SK-N-SH (cell line): ENCODE measurements at regions of chr17 and their contacts with region 1.

Region 1: GRCh38 chr17:75625813-75626486 is 7.3 kb upstream of the SMIM5 start:
- DNase-seq: peak; percentile 92
- H3K4me3 ChIP-seq: no peak overlapping the region
- H3K27ac ChIP-seq: peak overlapping the region in 1 of 2 experiments; percentile 1; a peak in 1 of 4 replicates
- H3K4me1 ChIP-seq: peaks cover 0 to 23% of the 10 kb centered on the region in 2 experiments; a peak in 1 of 4 replicates
- H3K27me3 ChIP-seq: no peaks in the 10 kb centered on the region
- CTCF ChIP-seq: peak; percentile 79
- EP300 ChIP-seq: no peak
- RAD21 ChIP-seq: peak; percentile 23

Region 2: GRCh38 chr17:75614006-75614405 is 11.9 kb before region 1 on chr17:
- CTCF ChIA-PET with region 1: interaction called, 31 read pairs
- POLR2A ChIA-PET with region 1: interaction called, 3 read pairs
- DNase-seq: peak; percentile 78
- H3K4me3 ChIP-seq: no peak overlapping the region
- H3K27ac ChIP-seq: no peak overlapping the region
- H3K4me1 ChIP-seq: no peaks in the 10 kb centered on the region
- H3K27me3 ChIP-seq: no peaks in the 10 kb centered on the region
- CTCF ChIP-seq: peak; percentile 20; the same call in 1 of the 2 replicates
- EP300 ChIP-seq: no peak
- RAD21 ChIP-seq: no peak